ENCODE measurements at regions of chr14 and their contacts with region 1.

Region 1: DNA sequence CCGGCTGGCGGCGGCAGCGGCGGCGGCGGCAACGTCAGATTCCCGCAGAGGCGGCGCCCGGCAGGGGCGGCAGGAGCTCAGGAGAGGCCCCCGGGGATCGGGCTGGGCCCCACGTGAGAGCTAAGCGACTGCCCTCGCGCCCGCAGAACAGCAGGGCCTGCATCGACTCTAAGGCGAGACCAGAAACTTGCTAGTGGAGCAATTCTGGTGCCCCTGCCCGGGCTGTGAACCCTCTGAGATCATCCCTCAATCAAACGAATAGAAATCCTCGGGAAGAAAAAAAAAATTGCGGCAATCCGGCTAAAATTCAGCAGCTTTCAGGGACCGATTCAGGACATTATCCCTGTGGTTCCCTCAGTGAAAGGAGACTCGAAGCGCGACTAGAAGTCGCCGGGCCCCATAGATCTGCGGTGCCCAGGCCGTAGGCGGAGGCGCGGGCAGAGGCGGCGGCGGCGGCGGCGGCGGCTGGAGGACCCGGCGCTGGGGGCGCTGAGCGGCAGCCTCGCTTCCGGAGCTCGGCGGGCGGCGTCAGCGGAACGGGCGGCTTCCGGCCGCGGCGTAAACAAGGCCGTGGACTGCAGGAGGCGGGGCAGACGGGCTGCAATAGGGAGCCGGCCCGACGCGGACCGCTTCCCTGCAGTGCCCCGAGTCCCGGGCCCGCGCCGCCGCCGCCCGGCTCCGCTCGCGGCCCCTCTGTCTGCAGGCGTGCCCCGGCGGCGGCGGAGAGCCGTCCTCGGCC is at the start of gene KLHDC2:
- DNase-seq: peak; percentile 81 to 92 (median 88)
- ATAC-seq: peak; percentile 79 to 82
- H3K4me3 Mint-ChIP-seq: peak within 1 kb of the TSS; percentile 91 to 98 (median 96)
- H3K27ac Mint-ChIP-seq: peak within 1 kb of the TSS; percentile 96 to 100 (median 99)
- H3K4me1 Mint-ChIP-seq: peaks cover 10 to 41% (median 39%) of the 10 kb centered on the region in 4 donors
- H3K27me3 Mint-ChIP-seq: no peaks in the 10 kb centered on the region
- polyA plus RNA-seq, gene KLHDC2: 72.5 to 77.4 (median 75.5) TPM

Region 2: DNA sequence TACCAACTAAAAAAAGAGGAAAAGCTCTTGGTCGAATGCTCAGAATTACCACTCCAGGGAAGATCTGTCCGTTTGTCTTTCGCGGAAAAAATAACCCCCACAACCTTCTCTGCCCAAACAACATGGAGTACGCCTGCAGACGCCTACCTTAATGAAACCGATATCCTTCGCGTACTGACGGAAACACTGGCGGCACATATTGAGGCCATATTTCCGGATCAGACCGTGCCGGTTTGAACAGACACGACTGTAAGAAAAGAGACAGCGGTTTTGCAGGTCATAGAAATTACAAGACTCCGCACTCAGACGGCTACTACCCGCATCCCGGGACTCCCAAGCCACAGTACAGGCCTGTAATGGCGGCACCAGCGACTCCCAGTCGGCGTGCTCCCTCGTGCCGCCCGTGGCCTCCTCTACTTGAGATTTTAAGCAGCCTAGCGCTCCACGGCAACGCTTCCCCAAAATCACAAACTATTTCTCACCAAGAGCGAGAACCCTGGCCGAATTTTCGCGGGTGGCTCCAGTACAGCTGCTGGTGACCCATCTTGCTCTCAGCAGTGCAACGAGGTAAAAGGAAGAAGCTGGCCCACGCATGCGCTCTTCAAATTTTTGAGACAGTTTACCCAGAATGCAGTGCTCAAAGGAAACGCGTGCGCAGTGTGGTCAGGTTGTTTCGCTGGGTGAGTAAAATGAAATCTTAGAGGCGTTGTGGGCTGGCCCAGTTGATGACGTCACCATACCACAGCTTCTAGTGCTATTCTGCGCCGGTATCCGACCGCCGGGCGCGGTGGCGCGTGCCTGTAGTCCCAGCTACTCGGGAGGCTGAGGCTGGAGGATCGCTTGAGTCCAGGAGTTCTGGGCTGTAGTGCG is 181.7 kb before region 1 on chr14 and contains the start of gene RPS29:
- POLR2A ChIA-PET with region 1: interaction called, 30 read pairs
- DNase-seq: peak; percentile 87 to 99 (median 98)
- ATAC-seq: peak; percentile 85 to 87
- H3K4me3 Mint-ChIP-seq: peak within 1 kb of the TSS; percentile 89 to 99 (median 94)
- H3K27ac Mint-ChIP-seq: peak within 1 kb of the TSS; percentile 97 to 100 (median 99)
- H3K4me1 Mint-ChIP-seq: peaks cover 21 to 55% (median 46%) of the 10 kb centered on the region in 4 donors
- H3K27me3 Mint-ChIP-seq: peaks cover 0 to 9% (median 0%) of the 10 kb centered on the region in 5 donors
- polyA plus RNA-seq, gene RPS29: 11,853 to 13,490 (median 12,998) TPM

Region 3: GRCh38 chr14:49620182-49621113 is 147.3 kb before region 1 on chr14 and contains the starts of genes MGAT2 and RPL36AL:
- POLR2A ChIA-PET with region 1: interaction called, 64 read pairs
- DNase-seq: peak; percentile 82 to 98 (median 92)
- ATAC-seq: peak; percentile 84 to 86
- H3K4me3 Mint-ChIP-seq: peak within 1 kb of the TSS; percentile 93 to 99 (median 98)
- H3K27ac Mint-ChIP-seq: peak within 1 kb of the TSS; percentile 97 to 99 (median 99)
- H3K4me1 Mint-ChIP-seq: peaks cover 18 to 65% (median 51%) of the 10 kb centered on the region in 4 donors
- H3K27me3 Mint-ChIP-seq: no peaks in the 10 kb centered on the region
- polyA plus RNA-seq, gene MGAT2: 15.8 to 25.9 (median 19.8) TPM
- polyA plus RNA-seq, gene RPL36AL: 489 to 628 (median 623) TPM

Region 4: DNA sequence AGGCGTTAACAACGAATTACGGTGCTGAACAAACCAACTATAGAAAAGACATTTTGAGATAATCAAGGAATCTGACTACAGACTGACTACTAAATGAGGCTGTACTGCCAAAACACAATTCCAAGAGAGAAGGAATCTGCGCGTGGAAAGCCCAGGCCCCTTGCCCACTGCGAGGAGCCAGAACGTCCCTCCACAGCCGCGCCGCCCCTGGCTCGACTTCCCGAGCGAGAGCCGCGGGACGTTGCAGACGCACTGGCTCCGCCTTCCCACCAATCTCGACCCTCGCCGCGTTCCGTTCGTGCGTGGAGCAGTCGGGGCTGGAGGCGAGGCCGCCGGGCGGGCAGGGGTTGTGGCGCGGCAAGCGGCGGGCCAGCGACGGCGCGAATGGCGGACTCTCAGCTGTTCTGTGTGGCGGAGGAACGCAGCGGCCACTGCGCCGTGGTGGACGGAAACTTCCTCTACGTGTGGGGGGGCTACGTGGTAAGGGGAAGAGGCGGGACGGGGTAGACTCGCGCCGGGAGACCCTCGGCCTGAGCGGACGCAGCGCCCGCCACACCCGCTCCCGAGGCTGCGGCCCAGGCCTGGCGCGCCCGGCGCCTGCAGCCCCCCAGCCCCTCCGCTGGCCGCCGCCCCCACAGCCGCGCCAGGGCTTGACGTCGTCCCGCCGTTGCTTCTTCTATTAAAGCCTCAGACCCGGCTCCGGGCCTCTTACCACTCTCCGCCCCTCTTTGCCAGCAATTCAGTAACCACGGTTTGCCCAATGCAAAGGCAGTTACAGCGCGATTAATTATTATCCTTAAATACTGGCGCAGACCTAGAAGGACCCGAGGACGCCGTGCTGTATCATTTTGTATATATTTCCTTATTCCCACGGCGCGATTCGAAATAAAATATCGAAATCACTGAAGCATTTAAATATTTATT is 74.7 kb before region 1 on chr14 and contains the start of gene KLHDC1:
- POLR2A ChIA-PET with region 1: interaction called, 19 read pairs
- DNase-seq: peak; percentile 67 to 88 (median 78)
- ATAC-seq: peak; percentile 87 to 91
- H3K4me3 Mint-ChIP-seq: peak within 1 kb of the TSS; percentile 74 to 94 (median 90)
- H3K27ac Mint-ChIP-seq: peak within 1 kb of the TSS; percentile 66 to 98 (median 93)
- H3K4me1 Mint-ChIP-seq: peaks cover 2 to 54% (median 40%) of the 10 kb centered on the region in 4 donors
- H3K27me3 Mint-ChIP-seq: no peaks in the 10 kb centered on the region
- polyA plus RNA-seq, gene KLHDC1: 2.6 to 9.0 (median 3.2) TPM

Region 5: GRCh38 chr14:49852301-49853157 is 84.8 kb after region 1 on chr14 and contains the start of gene NEMF:
- POLR2A ChIA-PET with region 1: interaction called, 45 read pairs
- DNase-seq: peak; percentile 57 to 89 (median 78)
- ATAC-seq: peak; percentile 80 to 84
- H3K4me3 Mint-ChIP-seq: peak within 1 kb of the TSS; percentile 91 to 100 (median 96)
- H3K27ac Mint-ChIP-seq: peak within 1 kb of the TSS; percentile 93 to 99 (median 96)
- H3K4me1 Mint-ChIP-seq: peaks cover 20 to 48% (median 46%) of the 10 kb centered on the region in 4 donors
- H3K27me3 Mint-ChIP-seq: no peaks in the 10 kb centered on the region
- polyA plus RNA-seq, gene NEMF: 39.6 to 46.1 (median 43.5) TPM

Region 6: DNA sequence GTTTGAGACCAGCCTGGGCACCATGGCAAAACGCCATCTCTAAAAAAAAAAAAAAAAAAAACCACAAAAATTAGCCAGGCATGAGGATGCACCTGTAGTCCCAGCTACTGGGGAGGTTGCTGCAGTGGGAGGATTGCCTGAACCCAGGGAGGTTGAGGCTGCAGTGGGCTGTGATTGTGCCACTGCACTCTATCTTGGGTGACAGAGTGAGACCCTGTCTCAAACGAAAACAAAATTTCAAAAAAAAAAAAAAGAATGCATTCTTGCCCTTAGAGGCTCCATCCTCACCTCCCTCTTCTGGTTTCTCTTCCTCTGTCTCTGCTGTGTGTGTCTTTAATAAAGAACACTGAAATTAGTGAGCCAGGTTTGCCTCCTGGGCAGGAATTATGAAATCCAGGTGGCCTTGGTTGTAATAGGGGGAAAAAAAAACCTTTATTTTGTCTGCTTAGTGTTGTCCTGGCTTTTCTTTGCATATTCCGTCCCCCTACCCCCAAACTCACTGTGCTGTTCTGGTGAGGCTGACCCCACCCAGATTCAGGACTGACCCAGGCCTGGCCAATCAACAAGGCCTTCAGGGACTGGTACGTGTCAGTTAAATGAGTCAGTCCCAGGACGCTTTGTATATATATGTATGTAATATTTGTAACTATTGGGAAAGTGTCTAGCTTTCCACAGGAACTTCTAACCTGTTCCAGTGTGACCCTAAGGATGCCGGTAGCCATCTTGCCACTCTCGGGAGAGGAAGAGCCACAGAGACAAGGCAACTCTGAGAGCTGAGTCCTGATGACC is 241.0 kb after region 1 on chr14:
- POLR2A ChIA-PET with region 1: no interaction called
- DNase-seq: no peak
- ATAC-seq: peak in 1 of 2 donors; percentile 19
- H3K4me3 Mint-ChIP-seq: peak overlapping the region in 1 of 10 donors; percentile 54
- H3K27ac Mint-ChIP-seq: peak overlapping the region in 2 of 10 donors; percentile 4 to 76
- H3K4me1 Mint-ChIP-seq: peaks cover 4 to 27% (median 10%) of the 10 kb centered on the region in 4 donors
- H3K27me3 Mint-ChIP-seq: no peaks in the 10 kb centered on the region